ENCODE measurements at regions of chr2 and their contacts with region 1.

Region 1: DNA sequence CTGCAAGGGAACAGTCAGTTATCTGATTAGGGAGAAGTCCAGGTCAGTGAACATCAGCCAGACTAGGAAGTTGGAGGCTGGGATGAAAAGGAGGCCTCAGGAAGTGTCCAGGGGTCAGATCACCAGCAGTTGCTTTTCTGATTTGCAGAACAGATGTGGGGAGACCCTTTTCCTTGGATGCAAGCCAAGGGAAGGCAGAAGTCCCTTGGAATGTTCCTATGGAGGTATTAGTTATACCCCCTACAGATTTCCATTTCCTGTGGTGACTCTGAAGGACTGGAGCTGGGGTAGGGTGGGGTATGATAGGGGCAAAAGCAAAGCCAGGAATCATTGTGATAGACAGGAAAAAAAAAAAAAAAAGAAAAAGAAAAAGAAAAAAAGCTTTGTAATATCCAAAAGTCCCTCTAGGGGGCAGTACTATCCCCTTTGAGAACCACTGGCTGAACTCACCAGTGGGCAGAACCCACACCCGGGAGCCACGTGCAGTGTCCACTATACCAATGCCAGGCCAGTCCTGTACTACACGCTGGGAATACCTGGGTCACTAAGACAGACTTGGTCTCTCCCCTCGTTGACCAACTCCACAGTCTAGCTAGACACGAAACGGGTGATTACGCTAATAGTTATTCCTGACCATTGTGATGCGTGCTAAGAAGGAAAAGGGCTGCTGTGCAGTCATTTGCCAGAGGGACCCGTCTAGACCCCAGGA is 7.4 kb downstream of the DYSF start:
- DNase-seq: peak; percentile 42 to 60
- ATAC-seq: peak; percentile 44 to 67; a peak in 5 of 6 replicates
- H3K4me3 ChIP-seq: no peak overlapping the region
- H3K27ac ChIP-seq: no peak overlapping the region
- H3K4me1 ChIP-seq: peaks cover 13% of the 10 kb centered on the region
- CTCF ChIP-seq: peak; percentile 88
- EP300 ChIP-seq: no peak
- POLR2A ChIP-seq: no peak
- RAD21 ChIP-seq: peak; percentile 62 to 65

Region 2: DNA sequence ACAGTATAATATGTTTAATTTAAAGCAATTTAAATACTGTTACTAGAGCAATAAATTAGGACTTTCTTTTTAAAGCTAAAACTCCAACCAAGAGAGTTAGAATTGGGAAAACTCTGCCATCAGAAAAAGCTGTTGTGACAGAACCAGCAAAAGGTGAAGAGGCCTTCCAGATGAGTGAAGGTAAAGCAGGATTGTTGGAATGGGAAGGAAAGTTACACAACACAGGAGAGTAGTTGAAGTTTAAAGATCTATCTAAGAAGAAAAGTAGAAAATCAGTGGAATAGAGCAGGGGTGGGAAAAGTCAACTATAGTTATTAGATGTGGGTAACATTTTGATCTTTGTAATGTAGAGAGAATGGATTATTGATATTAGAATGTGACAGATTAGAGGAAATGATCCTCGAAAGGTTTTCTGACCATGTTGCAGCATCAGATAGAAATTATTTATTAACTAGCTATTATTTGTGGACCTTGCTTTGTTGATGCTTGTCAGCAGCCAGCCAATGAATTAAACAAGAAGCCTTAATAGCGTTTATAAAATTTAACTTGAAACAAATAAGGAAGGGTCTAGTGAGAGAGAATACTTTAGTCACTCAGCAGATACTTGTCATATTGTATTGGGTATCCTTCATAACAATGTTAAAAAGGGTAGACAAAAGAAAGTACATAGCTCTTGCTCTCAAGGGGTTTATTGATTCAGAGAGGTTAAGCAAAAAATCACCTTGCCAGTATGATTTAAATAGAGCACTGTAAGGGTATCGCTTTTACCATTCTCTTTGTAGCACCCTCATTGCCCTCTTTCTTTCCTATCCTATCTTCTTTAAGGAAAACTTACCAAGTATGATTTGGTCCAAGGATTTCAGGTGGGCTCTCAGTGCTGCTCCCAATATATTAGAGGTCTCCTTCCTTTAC is 32.0 kb before region 1 on chr2:
- CTCF ChIA-PET with region 1: interaction called, 46 read pairs
- POLR2A ChIA-PET with region 1: no interaction called
- DNase-seq: no peak
- ATAC-seq: no peak
- H3K4me3 ChIP-seq: no peak overlapping the region
- H3K27ac ChIP-seq: no peak overlapping the region
- H3K4me1 ChIP-seq: no peaks in the 10 kb centered on the region; the same call in 2 of the 3 replicates
- CTCF ChIP-seq: no peak
- EP300 ChIP-seq: no peak
- POLR2A ChIP-seq: no peak
- RAD21 ChIP-seq: no peak

Region 3: DNA sequence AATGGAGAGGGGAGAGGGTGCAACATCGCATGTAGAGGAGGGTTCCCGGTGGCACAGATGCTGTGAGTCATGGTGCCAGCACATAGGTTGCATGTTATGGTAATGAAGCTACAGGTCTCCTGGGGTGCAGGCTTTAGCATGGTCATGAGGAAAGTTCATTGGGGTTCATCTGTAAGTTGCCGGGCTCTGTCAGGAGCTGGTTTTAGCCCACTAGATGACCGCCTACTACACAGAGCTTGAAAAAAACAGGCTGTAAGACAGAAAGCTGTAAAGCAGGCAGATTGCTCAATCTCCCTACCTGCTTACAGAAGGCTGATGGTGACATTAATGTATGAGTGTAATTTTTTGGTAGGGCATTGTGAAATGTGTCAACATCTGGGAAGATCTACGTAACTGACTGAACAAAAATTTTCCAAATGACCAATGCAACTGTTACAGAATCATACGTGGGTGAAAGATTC is 16.5 kb after region 1 on chr2:
- CTCF ChIA-PET with region 1: interaction called, 40 read pairs
- POLR2A ChIA-PET with region 1: no interaction called
- DNase-seq: no peak
- ATAC-seq: no peak
- H3K4me3 ChIP-seq: no peak overlapping the region
- H3K27ac ChIP-seq: no peak overlapping the region
- H3K4me1 ChIP-seq: no peaks in the 10 kb centered on the region
- CTCF ChIP-seq: no peak
- EP300 ChIP-seq: no peak
- POLR2A ChIP-seq: no peak
- RAD21 ChIP-seq: no peak

Region 4: DNA sequence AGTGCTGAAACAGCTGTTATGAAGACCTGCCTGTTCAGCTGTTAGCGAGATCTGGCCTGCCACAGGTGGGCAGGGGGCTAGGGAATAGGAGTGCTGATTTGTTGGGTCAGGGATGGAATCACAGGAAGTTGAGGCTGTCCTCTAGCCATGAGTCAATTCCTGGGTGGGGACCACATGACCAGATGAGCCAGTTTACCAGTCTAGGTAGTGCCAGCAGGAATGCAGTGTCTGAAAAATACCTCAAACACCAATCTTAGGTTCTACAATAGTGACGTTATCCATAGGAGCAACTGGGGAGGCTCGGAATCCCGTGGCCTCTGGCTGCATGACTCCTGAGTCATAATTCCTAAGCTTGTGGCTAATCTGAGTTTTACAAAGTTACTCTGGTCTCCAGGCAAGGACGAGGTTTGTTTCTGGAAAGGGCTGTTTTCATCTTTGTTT is 37.5 kb after region 1 on chr2:
- CTCF ChIA-PET with region 1: interaction called, 311 read pairs
- POLR2A ChIA-PET with region 1: no interaction called
- DNase-seq: peak; percentile 25 to 75
- ATAC-seq: peak; percentile 83 to 84
- H3K4me3 ChIP-seq: no peak overlapping the region
- H3K27ac ChIP-seq: peak overlapping the region; percentile 14 to 55; a peak in 3 of 6 replicates
- H3K4me1 ChIP-seq: 0 out of 3 replicates have a peak, but pooled peaks cover 13% of the 10 kb centered on the region
- CTCF ChIP-seq: no peak
- EP300 ChIP-seq: no peak
- POLR2A ChIP-seq: no peak
- RAD21 ChIP-seq: no peak

Region 5: GRCh38 chr2:71742953-71743601 is 282.3 kb after region 1 on chr2:
- CTCF ChIA-PET with region 1: no interaction called
- POLR2A ChIA-PET with region 1: no interaction called
- DNase-seq: peak; percentile 72 to 87
- ATAC-seq: peak; percentile 93
- H3K4me3 ChIP-seq: no peak overlapping the region
- H3K27ac ChIP-seq: peak overlapping the region; percentile 72 to 88
- H3K4me1 ChIP-seq: peaks cover 43% of the 10 kb centered on the region
- CTCF ChIP-seq: no peak
- EP300 ChIP-seq: 0 out of 5 replicates have a peak, but pooled peaks of 1 of the 2 experiments have one; percentile 36
- POLR2A ChIP-seq: no peak
- RAD21 ChIP-seq: no peak

Measured in A549 (cell line).